Naive thymus-derived CD4-positive, alpha-beta T cell (primary cell): ENCODE measurements at regions of chr5 and their contacts with region 1.

Region 1: DNA sequence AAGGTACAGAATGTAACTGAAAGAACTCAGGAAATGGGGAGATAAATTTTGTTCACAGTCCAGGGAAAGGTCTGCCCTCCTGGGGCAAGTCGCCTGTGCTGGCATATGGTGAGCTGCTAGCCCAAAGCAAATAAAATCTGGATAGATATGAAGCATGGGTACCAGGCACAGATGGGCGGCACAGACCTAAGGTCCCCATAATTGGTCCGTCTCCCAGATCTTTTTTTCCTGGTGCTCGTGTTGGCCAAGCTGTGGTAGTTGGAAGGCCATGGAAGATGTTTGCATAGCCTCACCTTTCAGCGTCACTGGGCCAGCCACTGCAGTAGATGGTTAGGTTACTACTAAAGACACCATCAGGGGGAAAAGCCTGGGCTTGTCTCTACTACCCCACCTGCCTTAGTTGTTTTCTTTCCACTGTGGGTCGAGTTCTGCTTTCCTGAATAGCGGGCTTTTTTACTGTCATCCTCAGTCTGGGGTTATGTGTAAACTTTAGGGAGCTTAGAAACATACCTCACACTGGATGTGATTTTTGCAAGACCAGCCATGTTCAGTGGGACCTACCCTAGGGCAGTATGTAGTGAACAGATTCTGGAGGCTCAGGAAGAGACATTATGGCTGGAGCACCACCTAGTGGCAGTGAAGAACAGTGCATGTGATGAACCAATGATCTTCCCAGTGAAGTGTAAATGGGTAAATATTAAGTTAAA is 24.2 kb upstream of the GLRX start:
- DNase-seq: peak; percentile 38 to 73 (median 68)
- ATAC-seq: peak; percentile 88
- H3K4me3 ChIP-seq: no peak overlapping the region
- H3K4me3 Mint-ChIP-seq: no peak overlapping the region
- H3K27ac ChIP-seq: no peak overlapping the region
- H3K27ac Mint-ChIP-seq: peak overlapping the region in 2 of 9 donors; percentile 3 to 18
- H3K4me1 ChIP-seq: peaks cover 10 to 13% of the 10 kb centered on the region in 2 donors
- H3K4me1 Mint-ChIP-seq: peaks cover 10 to 33% (median 16%) of the 10 kb centered on the region in 7 donors
- H3K27me3 ChIP-seq: no peaks in the 10 kb centered on the region
- H3K27me3 Mint-ChIP-seq: peaks cover 0 to 15% (median 0%) of the 10 kb centered on the region in 5 donors

Region 2: GRCh38 chr5:94968507-94969095 is 878.1 kb before region 1 on chr5:
- CTCF ChIA-PET with region 1: no interaction called
- POLR2A ChIA-PET with region 1: no interaction called
- intact Hi-C with region 1: loop called in 1 of 2 experiments (anchors 5 kb)
- DNase-seq: peak in 5 of 9 donors; percentile 21 to 49 (median 34)
- ATAC-seq: peak; percentile 72
- H3K4me3 ChIP-seq: no peak overlapping the region
- H3K4me3 Mint-ChIP-seq: no peak overlapping the region
- H3K27ac ChIP-seq: no peak overlapping the region
- H3K27ac Mint-ChIP-seq: no peak overlapping the region
- H3K4me1 ChIP-seq: no peaks in the 10 kb centered on the region
- H3K4me1 Mint-ChIP-seq: no peaks in the 10 kb centered on the region
- H3K27me3 ChIP-seq: no peaks in the 10 kb centered on the region
- H3K27me3 Mint-ChIP-seq: peaks cover 0 to 6% (median 0%) of the 10 kb centered on the region in 5 donors

Region 3: GRCh38 chr5:95664204-95664786 is 182.4 kb before region 1 on chr5:
- CTCF ChIA-PET with region 1: interaction called, 6 read pairs
- POLR2A ChIA-PET with region 1: no interaction called
- intact Hi-C with region 1: loop called (anchors 1 kb)
- DNase-seq: peak in 5 of 9 donors; percentile 31 to 49 (median 41)
- ATAC-seq: peak; percentile 65
- H3K4me3 ChIP-seq: no peak overlapping the region
- H3K4me3 Mint-ChIP-seq: no peak overlapping the region
- H3K27ac ChIP-seq: no peak overlapping the region
- H3K27ac Mint-ChIP-seq: no peak overlapping the region
- H3K4me1 ChIP-seq: peaks cover 0 to 5% of the 10 kb centered on the region in 2 donors
- H3K4me1 Mint-ChIP-seq: peaks cover 0 to 8% (median 3%) of the 10 kb centered on the region in 7 donors
- H3K27me3 ChIP-seq: no peaks in the 10 kb centered on the region
- H3K27me3 Mint-ChIP-seq: peaks cover 0 to 8% (median 0%) of the 10 kb centered on the region in 5 donors

Region 4: GRCh38 chr5:95770830-95771708 is 75.6 kb before region 1 on chr5:
- CTCF ChIA-PET with region 1: interaction called, 16 read pairs
- POLR2A ChIA-PET with region 1: no interaction called
- intact Hi-C with region 1: no loop called
- DNase-seq: no peak
- ATAC-seq: no peak
- H3K4me3 ChIP-seq: no peak overlapping the region
- H3K4me3 Mint-ChIP-seq: no peak overlapping the region
- H3K27ac ChIP-seq: no peak overlapping the region
- H3K27ac Mint-ChIP-seq: no peak overlapping the region
- H3K4me1 ChIP-seq: no peaks in the 10 kb centered on the region
- H3K4me1 Mint-ChIP-seq: peaks cover 0 to 9% (median 0%) of the 10 kb centered on the region in 7 donors
- H3K27me3 ChIP-seq: no peaks in the 10 kb centered on the region
- H3K27me3 Mint-ChIP-seq: peaks cover 0 to 25% (median 0%) of the 10 kb centered on the region in 5 donors

Region 5: DNA sequence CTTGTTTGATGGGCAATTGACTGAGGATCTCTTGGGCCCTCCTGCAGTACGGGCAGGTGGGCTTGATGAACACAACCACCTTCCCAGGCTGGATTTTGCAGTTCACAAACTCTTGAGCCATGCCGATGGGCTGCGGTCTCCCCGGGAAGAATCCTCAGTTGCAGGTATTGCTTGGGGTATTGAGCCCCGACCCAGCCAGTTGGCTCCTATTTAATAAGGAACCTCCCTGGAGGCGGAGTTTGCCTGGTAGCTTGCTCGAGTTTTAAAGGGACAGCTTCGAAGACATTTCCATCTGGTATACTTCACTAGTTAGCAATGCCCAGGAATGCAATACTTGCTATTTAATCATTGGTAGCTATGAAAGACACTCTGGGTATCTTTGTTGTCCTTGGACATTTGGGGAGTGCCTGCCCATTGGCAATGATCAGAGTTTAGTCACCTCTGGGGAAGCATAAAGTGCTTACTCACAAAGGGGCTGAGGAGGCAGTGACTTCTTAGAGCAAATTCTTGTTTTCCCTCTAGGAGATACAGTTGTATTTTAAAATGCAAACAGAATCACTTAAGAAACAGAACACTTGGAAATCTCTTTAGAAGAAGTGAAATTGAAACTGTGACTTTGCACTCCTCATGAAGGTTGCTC is 24.0 kb before region 1 on chr5 and contains the start of gene GLRX:
- CTCF ChIA-PET with region 1: interaction called, 12 read pairs
- POLR2A ChIA-PET with region 1: interaction called, 11 read pairs
- intact Hi-C with region 1: loop called (anchors 1 kb)
- DNase-seq: peak in 8 of 9 donors; percentile 48 to 62 (median 58)
- ATAC-seq: peak; percentile 52
- H3K4me3 ChIP-seq: peak within 1 kb of the TSS; percentile 93
- H3K4me3 Mint-ChIP-seq: peak within 1 kb of the TSS; percentile 91 to 100 (median 99)
- H3K27ac ChIP-seq: peak within 1 kb of the TSS; percentile 84
- H3K27ac Mint-ChIP-seq: peak within 1 kb of the TSS; percentile 91 to 97 (median 95)
- H3K4me1 ChIP-seq: peaks cover 38% of the 10 kb centered on the region in 2 donors
- H3K4me1 Mint-ChIP-seq: peaks cover 53 to 78% (median 61%) of the 10 kb centered on the region in 7 donors
- H3K27me3 ChIP-seq: no peaks in the 10 kb centered on the region
- H3K27me3 Mint-ChIP-seq: no peaks in the 10 kb centered on the region
- total RNA-seq, gene GLRX: 26.3 to 89.5 (median 55.6) TPM

Region 6: GRCh38 chr5:95949810-95950209 is 103.1 kb after region 1 on chr5:
- CTCF ChIA-PET with region 1: no interaction called
- POLR2A ChIA-PET with region 1: no interaction called
- intact Hi-C with region 1: no loop called
- DNase-seq: no peak
- ATAC-seq: no peak
- H3K4me3 ChIP-seq: no peak overlapping the region
- H3K4me3 Mint-ChIP-seq: peak overlapping the region in 1 of 10 donors; percentile 45
- H3K27ac ChIP-seq: no peak overlapping the region
- H3K27ac Mint-ChIP-seq: no peak overlapping the region
- H3K4me1 ChIP-seq: no peaks in the 10 kb centered on the region
- H3K4me1 Mint-ChIP-seq: peaks cover 6 to 60% (median 18%) of the 10 kb centered on the region in 7 donors
- H3K27me3 ChIP-seq: no peaks in the 10 kb centered on the region
- H3K27me3 Mint-ChIP-seq: no peaks in the 10 kb centered on the region